AG04449 (cell line): ENCODE measurements at regions of chr6 and their contacts with region 1.

Region 1: GRCh38 chr6:31158140-31158862 is at the start of gene TCF19:
- DNase-seq: peak; percentile 91
- H3K4me3 ChIP-seq: peak within 1 kb of the TSS; percentile 84
- CTCF ChIP-seq: no peak

Region 2: DNA sequence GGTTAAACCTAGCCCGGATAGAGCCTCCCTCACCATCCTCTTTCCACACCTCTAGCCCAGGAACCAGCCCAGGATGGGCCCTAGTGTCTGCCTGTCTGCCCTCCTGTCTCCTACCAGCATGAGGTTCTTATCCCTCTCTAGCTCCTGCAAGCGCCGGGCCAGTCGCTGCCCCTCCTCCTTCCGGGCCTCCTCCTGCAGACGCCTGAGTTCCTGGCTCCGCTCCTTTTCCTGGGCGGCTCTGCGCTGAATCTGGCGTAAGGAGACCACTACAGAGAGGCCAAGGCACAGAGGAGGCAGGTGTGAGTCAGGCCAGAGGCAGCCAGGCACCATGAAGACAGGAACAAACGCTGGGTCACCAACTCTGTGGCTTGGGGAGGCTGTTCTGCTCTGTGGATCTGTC is 15.2 kb before region 1 on chr6:
- CTCF ChIA-PET with region 1: interaction called, 16 read pairs
- POLR2A ChIA-PET with region 1: interaction called, 8 read pairs
- DNase-seq: no peak
- H3K4me3 ChIP-seq: no peak overlapping the region
- CTCF ChIP-seq: no peak